Adrenal gland (tissue), 19 donors: ENCODE measurements at regions of chr1 and their contacts with region 1.

Region 1: GRCh38 chr1:235415008-235415904 is 48.0 kb downstream of the TBCE start:
- DNase-seq: peak; percentile 49 to 85 (median 74)
- H3K4me3 ChIP-seq: no peak overlapping the region
- H3K27ac ChIP-seq: no peak overlapping the region
- H3K4me1 ChIP-seq: peaks cover 6 to 8% of the 10 kb centered on the region in 2 donors
- H3K27me3 ChIP-seq: no peaks in the 10 kb centered on the region
- CTCF ChIP-seq: peak; percentile 60 to 80 (median 76)
- POLR2A ChIP-seq: no peak

Region 2: DNA sequence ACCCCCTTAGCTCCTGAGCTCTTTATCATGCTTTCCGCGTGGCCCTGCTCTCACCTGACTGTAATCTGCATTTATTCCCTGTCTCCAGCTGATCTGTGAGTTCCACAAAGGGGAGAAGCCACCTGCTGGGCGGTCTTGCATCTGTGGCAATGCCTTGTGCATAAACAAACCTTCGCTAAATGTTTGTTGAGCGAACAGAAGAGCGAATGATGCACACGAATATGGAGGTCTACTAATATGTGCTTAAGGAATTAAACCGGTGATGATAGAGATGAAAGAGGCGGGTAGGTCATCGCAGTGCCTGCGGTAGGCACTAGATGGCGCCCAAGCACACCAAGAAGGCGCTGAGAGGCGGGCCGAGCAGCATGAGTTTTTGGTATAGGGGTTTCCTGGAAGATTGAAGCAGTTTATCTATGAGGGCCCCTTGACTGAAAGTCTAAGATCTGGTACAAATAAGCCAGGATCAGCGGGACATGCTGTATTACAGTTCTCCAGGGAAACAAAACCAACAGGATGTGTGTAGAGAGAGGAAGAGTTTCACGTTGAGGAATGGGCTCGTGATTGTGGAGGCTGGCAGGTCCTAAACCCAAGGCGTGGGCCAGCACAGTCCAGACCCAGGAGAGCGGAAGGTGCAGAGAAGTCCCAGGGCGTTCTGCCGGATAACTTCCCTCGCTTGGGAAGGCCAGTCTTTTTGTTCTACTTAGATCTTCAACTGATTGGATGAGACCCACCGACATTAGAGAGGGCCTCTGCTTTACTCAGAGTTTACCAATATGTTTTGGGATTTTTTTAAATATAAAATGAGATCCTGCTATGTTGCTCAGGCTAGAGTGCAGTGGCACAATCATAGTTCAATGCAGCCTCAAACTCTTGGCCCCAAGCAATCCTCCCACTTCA is 321.3 kb before region 1 on chr1:
- intact Hi-C with region 1: loop called in 1 of 2 experiments (anchors 10 kb)
- DNase-seq: peak; percentile 59 to 93 (median 80)
- H3K4me3 ChIP-seq: peak overlapping the region in 1 of 4 donors; percentile 7
- H3K27ac ChIP-seq: peak overlapping the region in 2 of 5 donors; percentile 8 to 10
- H3K4me1 ChIP-seq: peaks cover 0 to 10% of the 10 kb centered on the region in 2 donors
- H3K27me3 ChIP-seq: no peaks in the 10 kb centered on the region
- CTCF ChIP-seq: peak; percentile 75 to 90 (median 80)
- POLR2A ChIP-seq: no peak

Region 3: GRCh38 chr1:235253219-235253962 is 161.9 kb before region 1 on chr1:
- intact Hi-C with region 1: loop called (anchors 5 kb)
- DNase-seq: peak; percentile 65 to 85 (median 71)
- H3K4me3 ChIP-seq: no peak overlapping the region
- H3K27ac ChIP-seq: no peak overlapping the region
- H3K4me1 ChIP-seq: peaks cover 0 to 6% of the 10 kb centered on the region in 2 donors
- H3K27me3 ChIP-seq: no peaks in the 10 kb centered on the region
- CTCF ChIP-seq: peak; percentile 66 to 87 (median 84)
- POLR2A ChIP-seq: no peak

Region 4: DNA sequence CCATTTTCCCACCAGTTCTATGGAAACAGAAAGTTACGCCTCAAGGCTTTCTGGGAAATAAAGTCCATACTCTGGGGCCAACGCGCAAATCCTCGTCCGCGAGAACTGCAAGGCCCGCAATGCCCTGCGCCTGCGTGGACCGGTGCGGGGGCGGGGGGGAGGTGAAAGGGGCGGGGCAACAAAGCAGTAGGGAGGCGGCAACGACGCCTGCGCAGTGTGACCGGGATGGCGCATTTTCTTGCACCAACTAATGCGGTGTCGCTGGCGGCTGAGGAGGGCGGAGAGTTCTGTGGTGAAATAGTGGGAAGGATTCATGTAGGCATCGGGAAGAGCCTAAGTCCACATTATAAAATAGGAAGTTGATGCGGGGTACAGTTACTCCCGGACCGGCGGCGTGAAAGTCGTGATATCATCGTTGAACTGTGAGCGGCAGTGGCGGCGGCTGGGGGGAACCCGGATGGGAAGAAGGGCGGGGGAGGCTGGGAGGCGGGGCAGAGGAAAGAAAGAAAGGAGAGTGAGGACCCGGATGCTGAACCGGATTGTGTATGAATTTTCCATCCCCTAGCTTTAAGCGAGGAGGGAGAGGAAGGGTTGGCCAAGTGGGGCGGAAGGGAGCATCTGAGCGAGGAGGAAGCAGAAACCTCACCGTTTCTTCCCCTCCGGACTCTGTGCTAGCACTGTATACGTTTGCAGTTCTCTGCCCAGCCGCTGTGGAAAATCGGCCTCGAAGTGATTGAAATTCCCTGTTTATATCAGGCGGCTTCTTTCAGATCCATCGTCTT is 86.7 kb before region 1 on chr1 and contains the start of gene GGPS1:
- intact Hi-C with region 1: loop called in 1 of 2 experiments (anchors 10 kb)
- DNase-seq: peak; percentile 97 to 100 (median 99)
- H3K4me3 ChIP-seq: peak within 1 kb of the TSS; percentile 80 to 100 (median 98)
- H3K27ac ChIP-seq: peak within 1 kb of the TSS; percentile 69 to 96 (median 94)
- H3K4me1 ChIP-seq: peaks cover 23 to 59% of the 10 kb centered on the region in 2 donors
- H3K27me3 ChIP-seq: no peaks in the 10 kb centered on the region
- CTCF ChIP-seq: peak in 3 of 6 experiments; percentile 25 to 44 (median 35)
- POLR2A ChIP-seq: peak; percentile 78
- total RNA-seq, gene GGPS1: 12.6 to 50.9 (median 36.0) TPM

Region 5: DNA sequence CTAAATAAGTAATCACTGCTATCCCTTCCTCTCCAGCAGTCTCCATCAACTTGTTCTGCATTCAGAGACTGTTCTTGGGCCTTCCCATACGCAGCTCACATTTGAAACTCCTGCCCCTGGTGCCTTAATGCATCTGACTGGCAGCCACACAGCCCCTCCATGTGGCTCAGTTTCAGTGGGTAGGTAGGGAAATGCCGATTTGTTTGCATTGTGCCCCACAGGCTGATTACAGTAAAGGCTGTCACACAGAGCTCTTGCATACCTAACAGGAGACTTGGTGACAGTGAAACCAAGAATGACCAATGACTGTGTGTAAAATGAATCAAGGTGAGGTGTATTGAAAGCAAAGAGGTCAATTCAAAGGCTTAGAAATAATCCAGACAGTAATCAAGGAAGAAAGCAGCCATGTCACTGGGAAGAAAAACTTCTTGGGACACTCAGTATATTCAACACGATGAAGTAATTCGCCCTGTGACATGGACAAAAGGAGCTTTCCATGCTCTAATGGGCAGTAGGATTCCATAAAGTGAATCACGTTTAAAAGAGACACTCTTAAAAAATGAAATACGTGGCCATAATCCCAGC is 101.7 kb after region 1 on chr1:
- intact Hi-C with region 1: no loop called
- DNase-seq: no peak
- H3K4me3 ChIP-seq: no peak overlapping the region
- H3K27ac ChIP-seq: no peak overlapping the region
- H3K4me1 ChIP-seq: no peaks in the 10 kb centered on the region
- H3K27me3 ChIP-seq: no peaks in the 10 kb centered on the region
- CTCF ChIP-seq: no peak
- POLR2A ChIP-seq: no peak

Region 6: DNA sequence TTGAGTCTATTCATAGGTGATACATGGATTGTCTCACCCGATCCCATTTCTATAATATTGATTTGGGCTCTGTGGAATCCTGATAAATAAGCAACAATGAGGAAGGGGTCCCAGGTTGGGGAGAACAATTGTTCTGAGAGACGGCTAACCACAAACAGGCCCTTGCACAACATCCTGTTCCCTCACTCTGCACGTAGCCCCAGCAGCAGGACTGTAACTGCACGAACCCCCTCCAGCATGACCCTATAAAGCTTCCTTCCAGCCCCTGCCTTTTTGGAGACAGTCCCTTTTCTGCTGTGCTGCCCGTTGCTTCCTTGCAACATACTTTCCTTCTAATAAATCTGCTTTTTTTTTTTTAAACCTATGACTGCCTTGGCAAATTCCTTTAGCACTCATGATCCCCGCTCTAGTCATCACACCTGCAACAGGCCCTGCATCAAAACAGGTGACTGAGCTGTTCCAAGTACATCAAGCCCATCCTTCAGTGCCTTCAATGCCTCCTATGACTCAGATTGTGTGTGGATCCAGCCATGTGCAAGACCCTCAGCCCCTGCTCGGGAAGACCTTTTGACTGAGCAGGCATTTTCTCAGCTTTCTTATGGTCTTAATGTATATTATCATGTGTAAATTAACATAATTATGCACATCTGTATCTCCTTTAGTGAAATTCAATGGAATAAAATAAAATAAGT is 152.7 kb after region 1 on chr1:
- intact Hi-C with region 1: no loop called
- DNase-seq: no peak
- H3K4me3 ChIP-seq: no peak overlapping the region
- H3K27ac ChIP-seq: no peak overlapping the region
- H3K4me1 ChIP-seq: peaks cover 0 to 3% of the 10 kb centered on the region in 2 donors
- H3K27me3 ChIP-seq: no peaks in the 10 kb centered on the region
- CTCF ChIP-seq: no peak
- POLR2A ChIP-seq: no peak